Mammary epithelial cell (primary cell): ENCODE measurements at regions of chr12 and their contacts with region 1.

Region 1: GRCh38 chr12:51183816-51184215 is 10.9 kb upstream of the TFCP2 start:
- DNase-seq: peak; percentile 12
- H3K4me3 ChIP-seq: no peak overlapping the region
- H3K27ac ChIP-seq: no peak overlapping the region
- H3K4me1 ChIP-seq: no peaks in the 10 kb centered on the region
- H3K27me3 ChIP-seq: no peaks in the 10 kb centered on the region
- CTCF ChIP-seq: no peak

Region 2: DNA sequence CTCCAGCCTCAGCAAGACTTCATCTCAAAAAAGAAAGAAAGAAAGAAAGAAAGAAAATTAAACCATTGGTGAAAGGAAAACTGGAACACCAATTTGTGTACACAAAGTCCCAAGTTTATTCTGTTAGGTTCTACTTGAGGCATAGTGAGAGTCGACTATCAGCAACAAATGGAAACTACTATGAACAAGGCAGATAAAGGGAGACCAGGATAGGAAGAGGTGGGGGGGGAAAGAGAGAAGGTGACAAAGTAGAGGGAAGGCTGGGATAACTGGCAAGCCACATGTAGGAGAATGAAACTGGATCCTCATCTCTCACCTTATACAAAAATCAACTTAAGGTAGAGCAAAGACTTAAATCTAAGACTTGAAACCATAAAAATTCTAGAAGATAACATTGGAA is 36.5 kb before region 1 on chr12:
- CTCF ChIA-PET with region 1: no interaction called
- dilution Hi-C with region 1: loop called (anchors 5 kb)
- in situ Hi-C with region 1: no loop called
- intact Hi-C with region 1: no loop called
- DNase-seq: no peak
- H3K4me3 ChIP-seq: no peak overlapping the region
- H3K27ac ChIP-seq: no peak overlapping the region
- H3K4me1 ChIP-seq: no peaks in the 10 kb centered on the region
- H3K27me3 ChIP-seq: no peaks in the 10 kb centered on the region
- CTCF ChIP-seq: no peak

Region 3: DNA sequence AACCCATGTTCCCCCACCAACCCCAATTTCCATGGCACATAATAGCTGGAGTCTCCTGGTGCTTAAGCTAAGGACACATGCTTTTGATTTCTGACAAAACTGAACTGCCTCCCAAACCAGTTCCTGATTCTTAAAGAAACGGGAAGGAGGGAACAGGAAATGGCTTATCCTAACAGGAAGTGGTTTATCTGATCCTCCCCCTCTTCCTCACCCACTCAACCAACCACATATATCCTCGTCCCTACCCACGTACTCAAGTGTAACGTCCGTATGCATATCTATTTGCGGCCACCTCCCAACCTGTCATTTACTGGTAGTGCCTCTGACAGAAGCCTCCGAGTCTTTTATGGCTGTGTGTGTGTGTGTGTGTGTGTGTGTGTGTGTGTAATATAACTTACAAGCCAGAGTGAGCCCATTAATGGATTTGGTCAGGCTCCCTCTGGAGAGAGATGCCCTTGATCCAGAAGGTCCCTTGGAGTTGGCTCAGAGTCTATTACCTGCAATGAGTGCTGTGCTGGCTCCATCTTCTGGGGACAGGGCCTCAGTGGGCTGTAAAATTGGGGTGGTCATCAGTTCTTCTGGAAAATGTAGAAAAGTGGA is 62.5 kb after region 1 on chr12:
- CTCF ChIA-PET with region 1: no interaction called
- dilution Hi-C with region 1: loop called (anchors 5 kb)
- in situ Hi-C with region 1: no loop called
- intact Hi-C with region 1: no loop called
- DNase-seq: no peak
- H3K4me3 ChIP-seq: no peak overlapping the region
- H3K27ac ChIP-seq: no peak overlapping the region
- H3K4me1 ChIP-seq: no peaks in the 10 kb centered on the region
- H3K27me3 ChIP-seq: no peaks in the 10 kb centered on the region
- CTCF ChIP-seq: no peak

Region 4: GRCh38 chr12:51521554-51522276 is 337.9 kb after region 1 on chr12:
- CTCF ChIA-PET with region 1: no interaction called
- dilution Hi-C with region 1: loop called (anchors 10 kb)
- in situ Hi-C with region 1: no loop called
- intact Hi-C with region 1: no loop called
- DNase-seq: no peak
- H3K4me3 ChIP-seq: no peak overlapping the region
- H3K27ac ChIP-seq: no peak overlapping the region
- H3K4me1 ChIP-seq: no peaks in the 10 kb centered on the region
- H3K27me3 ChIP-seq: no peaks in the 10 kb centered on the region
- CTCF ChIP-seq: peak in 1 of 2 donors; percentile 32